ENCODE measurements at regions of chr2 and their contacts with region 1.

Region 1: GRCh38 chr2:192162392-192163042 is 32.2 kb downstream of the TMEFF2 start:
- DNase-seq: peak; percentile 65
- H3K4me3 Mint-ChIP-seq: no peak overlapping the region
- H3K27ac Mint-ChIP-seq: no peak overlapping the region
- H3K4me1 Mint-ChIP-seq: peaks cover 8% of the 10 kb centered on the region
- H3K27me3 Mint-ChIP-seq: peaks cover 10% of the 10 kb centered on the region

Region 2: DNA sequence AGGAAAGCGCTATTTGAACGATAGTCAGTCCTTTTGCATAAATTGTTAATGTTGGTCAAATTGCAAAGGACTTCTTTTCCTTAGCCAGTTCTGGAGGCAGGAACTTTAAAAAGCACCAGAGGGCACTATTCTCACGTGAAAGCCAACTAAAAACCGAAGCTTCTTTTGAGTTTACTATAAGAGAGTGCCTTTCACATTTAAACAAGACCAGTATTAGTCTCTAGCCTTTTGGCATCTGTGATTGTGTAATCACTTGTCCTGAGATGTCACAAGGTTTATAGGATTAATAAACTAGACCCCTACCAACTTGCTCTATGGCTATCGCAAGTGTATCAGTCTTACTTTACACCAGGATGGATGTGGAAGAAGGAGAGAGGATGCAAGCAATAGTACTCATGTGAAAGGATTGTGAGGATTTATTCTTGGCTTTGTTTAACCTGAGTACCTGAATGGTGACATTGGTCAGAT is 997.3 kb before region 1 on chr2:
- CTCF ChIA-PET with region 1: interaction called, 3 read pairs
- POLR2A ChIA-PET with region 1: no interaction called
- intact Hi-C with region 1: loop called (anchors 2 kb)
- DNase-seq: no peak
- H3K4me3 Mint-ChIP-seq: no peak overlapping the region
- H3K27ac Mint-ChIP-seq: no peak overlapping the region
- H3K4me1 Mint-ChIP-seq: peaks cover 13% of the 10 kb centered on the region
- H3K27me3 Mint-ChIP-seq: no peaks in the 10 kb centered on the region

Region 3: DNA sequence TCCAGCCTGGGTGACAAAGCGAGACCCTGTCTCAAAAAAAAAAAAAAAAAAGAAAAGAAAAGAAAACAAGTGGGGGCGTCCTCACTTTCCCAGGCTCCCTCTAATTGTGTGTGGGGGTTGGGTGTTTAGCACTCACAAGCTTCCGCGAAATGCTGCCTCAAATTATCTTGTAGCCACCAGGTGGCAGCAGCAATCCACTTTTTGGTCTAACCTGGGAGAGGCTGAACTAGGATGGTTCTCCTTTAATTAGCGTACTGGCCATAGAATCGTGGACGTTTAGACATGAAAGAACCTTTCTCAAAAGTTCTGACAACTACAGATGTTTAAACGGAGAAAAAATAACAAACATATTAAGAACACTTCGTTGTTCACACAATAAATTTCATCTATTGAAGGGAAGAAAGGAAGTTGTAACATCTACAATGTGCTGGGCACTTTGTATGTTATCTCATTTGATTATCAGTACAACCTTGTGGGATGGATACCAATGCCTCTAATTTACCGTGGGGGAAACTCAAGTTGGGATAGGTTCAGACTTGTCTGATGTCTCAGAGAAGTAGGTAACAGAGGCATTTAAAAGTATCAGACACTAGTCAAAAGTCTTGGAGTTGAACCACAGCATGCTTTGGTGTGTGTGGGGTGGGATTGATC is 607.3 kb before region 1 on chr2:
- CTCF ChIA-PET with region 1: interaction called, 149 read pairs
- POLR2A ChIA-PET with region 1: no interaction called
- intact Hi-C with region 1: loop called (anchors 1 kb)
- DNase-seq: peak; percentile 88
- H3K4me3 Mint-ChIP-seq: no peak overlapping the region
- H3K27ac Mint-ChIP-seq: no peak overlapping the region
- H3K4me1 Mint-ChIP-seq: peaks cover 2% of the 10 kb centered on the region
- H3K27me3 Mint-ChIP-seq: peaks cover 8% of the 10 kb centered on the region

Region 4: DNA sequence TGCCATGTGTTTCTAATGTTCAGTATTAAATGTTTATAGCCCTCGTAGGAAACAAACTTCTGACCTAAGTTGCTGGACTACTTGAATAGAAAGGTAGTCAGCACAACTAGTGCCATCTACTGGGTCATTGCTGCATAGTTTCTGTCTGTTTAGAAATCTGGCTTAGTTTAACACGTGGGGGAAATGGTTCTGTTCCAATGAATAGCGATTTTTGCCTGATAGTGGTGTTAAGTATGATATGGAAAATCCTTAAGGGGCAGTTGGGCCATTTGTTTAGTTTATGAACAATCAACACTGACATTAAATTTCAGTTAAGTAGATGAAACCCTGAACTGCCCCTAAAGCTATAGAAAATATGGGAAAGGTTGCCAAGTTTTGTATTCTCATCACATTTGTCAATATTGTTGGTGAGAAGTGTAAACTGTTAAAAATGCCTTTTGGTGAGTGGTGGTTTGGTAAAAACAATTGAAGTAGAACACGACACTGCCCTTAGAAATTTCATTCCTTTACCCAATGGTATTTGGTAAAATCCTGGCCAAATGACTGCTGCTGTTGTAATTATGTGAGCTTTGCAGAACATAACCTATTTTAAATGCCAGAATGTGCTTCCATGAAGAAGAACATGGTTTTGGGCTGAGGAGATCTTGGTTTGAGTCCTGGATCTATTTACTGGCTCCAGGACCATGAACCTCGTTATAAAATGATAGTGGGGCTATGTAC is 471.3 kb before region 1 on chr2:
- CTCF ChIA-PET with region 1: interaction called, 15 read pairs
- POLR2A ChIA-PET with region 1: no interaction called
- intact Hi-C with region 1: loop called (anchors 5 kb)
- DNase-seq: peak; percentile 31
- H3K4me3 Mint-ChIP-seq: no peak overlapping the region
- H3K27ac Mint-ChIP-seq: peak overlapping the region; percentile 60
- H3K4me1 Mint-ChIP-seq: peaks cover 55% of the 10 kb centered on the region
- H3K27me3 Mint-ChIP-seq: no peaks in the 10 kb centered on the region

Region 5: DNA sequence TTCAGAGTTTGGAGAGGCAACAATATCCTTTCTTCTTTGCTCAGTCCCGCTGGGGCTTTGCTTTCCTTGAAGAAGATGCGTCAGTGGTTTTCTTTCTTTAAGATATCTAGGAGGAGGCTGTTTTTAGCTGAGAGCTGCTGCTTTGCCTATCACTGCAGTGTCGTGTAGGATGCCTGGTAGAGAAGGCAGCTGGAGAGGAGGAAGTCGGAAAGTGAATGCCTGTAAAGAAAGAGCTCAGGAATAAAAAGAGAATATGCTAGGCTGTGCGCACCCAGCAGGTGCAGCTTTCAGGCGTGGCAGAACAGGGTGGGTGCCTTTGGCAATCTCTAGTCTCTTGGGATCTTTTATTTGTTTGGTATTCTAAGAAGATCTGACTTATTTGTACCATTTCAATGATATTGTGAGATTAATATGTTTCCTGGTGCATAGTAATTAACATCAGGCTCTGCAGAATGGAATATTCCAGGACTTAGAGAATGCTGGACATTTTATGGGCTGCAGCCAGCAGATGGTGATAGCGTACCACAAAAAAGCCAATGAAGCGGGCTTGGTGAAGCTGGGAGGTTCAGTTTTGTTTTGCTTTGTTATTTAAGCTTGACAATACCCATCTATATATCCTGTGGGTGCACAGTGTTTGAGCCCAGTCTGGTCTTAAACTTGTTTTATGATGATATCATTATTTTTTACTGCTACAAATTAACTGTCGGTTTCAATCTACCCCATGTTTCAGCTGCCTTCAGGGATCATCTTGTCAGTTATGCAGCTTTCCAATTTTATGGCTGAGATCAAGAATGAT is 350.5 kb before region 1 on chr2:
- CTCF ChIA-PET with region 1: interaction called, 102 read pairs
- POLR2A ChIA-PET with region 1: interaction called, 3 read pairs
- intact Hi-C with region 1: loop called (anchors 1 kb)
- DNase-seq: peak; percentile 54
- H3K4me3 Mint-ChIP-seq: no peak overlapping the region
- H3K27ac Mint-ChIP-seq: no peak overlapping the region
- H3K4me1 Mint-ChIP-seq: no peaks in the 10 kb centered on the region
- H3K27me3 Mint-ChIP-seq: peaks cover 6% of the 10 kb centered on the region

Region 6: DNA sequence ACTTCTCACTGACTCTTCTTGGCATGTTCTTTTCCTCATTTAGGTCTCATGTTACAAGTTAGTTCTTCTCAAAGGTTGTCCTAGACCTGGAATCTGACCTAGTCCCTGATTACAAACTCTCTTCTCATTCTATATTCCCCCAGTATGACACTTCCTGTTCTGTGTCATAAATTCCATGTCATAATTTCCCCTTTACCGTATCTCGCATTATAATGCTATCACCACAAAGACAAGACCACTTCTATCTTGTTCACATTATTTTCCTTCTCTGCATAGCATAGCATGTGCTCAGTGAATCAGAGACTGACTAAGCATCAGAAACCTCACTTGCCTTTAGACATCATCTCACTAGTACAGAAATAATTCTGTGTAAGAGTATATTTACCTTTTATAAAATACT is 252.0 kb before region 1 on chr2:
- CTCF ChIA-PET with region 1: no interaction called
- POLR2A ChIA-PET with region 1: no interaction called
- intact Hi-C with region 1: no loop called
- DNase-seq: no peak
- H3K4me3 Mint-ChIP-seq: no peak overlapping the region
- H3K27ac Mint-ChIP-seq: no peak overlapping the region
- H3K4me1 Mint-ChIP-seq: peaks cover 3% of the 10 kb centered on the region
- H3K27me3 Mint-ChIP-seq: peaks cover 1% of the 10 kb centered on the region

Region 7: DNA sequence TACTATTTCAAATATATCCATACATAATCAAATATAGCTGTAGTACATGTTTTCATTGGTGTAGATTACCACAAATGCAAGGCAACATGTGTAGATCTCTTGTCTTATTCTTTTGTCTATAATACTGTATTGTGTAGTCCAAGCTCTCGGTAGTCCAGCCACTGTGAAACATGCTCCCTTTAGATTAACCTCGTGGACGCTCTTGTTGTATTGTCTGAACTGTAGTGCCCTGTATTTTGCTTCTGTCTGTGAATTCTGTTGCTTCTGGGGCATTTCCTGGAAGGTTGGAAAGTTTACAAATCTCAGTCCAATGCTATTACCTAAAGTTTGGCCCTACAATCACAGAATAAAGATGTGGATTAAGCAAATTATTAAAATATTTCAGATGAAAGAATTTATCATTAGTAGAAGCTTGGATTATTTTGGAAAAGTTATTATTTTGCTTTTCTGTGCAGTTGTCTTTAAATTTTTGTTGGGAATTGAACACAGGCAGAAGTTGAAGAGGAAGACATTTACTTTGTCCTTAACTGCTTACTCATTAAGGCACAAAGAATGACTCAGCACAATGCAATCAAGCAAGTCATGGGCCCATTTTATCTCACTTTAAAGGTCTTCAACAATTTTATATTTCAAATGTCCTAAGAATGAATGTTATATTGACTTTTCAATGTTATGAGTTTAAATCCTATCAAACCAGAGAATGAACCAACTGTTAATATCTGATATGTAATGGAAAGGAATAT is 212.2 kb before region 1 on chr2:
- CTCF ChIA-PET with region 1: no interaction called
- POLR2A ChIA-PET with region 1: no interaction called
- intact Hi-C with region 1: loop called (anchors 10 kb)
- DNase-seq: no peak
- H3K4me3 Mint-ChIP-seq: no peak overlapping the region
- H3K27ac Mint-ChIP-seq: no peak overlapping the region
- H3K4me1 Mint-ChIP-seq: no peaks in the 10 kb centered on the region
- H3K27me3 Mint-ChIP-seq: peaks cover 1% of the 10 kb centered on the region

Region 8: GRCh38 chr2:192208848-192209247 is 46.3 kb after region 1 on chr2:
- CTCF ChIA-PET with region 1: no interaction called
- POLR2A ChIA-PET with region 1: no interaction called
- intact Hi-C with region 1: no loop called
- DNase-seq: no peak
- H3K4me3 Mint-ChIP-seq: no peak overlapping the region
- H3K27ac Mint-ChIP-seq: no peak overlapping the region
- H3K4me1 Mint-ChIP-seq: no peaks in the 10 kb centered on the region
- H3K27me3 Mint-ChIP-seq: peaks cover 4% of the 10 kb centered on the region

Region 9: DNA sequence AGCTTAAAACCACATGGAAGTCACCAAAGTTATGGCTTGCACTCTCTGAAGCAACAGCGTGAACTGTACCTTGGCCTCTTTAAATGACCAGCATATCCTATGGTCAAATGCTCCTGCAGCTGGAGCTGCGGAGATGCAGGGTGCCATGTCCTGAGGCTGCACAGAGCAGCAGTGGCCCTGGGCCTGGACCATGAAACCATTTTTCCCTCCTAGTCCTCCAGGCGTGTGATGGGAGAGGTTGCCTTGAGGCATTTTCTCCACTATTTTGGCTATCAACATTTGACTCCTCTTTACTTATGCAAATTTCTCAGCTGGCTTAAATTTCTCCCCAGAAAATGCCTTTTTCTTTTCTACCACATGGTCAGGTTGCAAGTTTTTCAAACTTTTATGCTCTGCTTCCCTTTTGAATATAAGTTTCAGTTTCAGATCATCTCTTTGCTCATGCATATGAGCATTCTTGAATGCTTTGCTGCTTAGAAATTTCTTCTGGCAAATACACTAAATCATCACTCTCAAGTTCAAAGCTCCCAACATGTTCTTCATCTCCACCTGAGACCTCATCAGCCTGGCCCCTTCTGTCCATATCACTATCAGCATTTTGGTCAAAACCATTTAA is 115.1 kb after region 1 on chr2:
- CTCF ChIA-PET with region 1: no interaction called
- POLR2A ChIA-PET with region 1: no interaction called
- intact Hi-C with region 1: no loop called
- DNase-seq: no peak
- H3K4me3 Mint-ChIP-seq: no peak overlapping the region
- H3K27ac Mint-ChIP-seq: no peak overlapping the region
- H3K4me1 Mint-ChIP-seq: no peaks in the 10 kb centered on the region
- H3K27me3 Mint-ChIP-seq: no peaks in the 10 kb centered on the region

Measured in activated CD4-positive, alpha-beta memory T cell treated with anti-CD3 and anti-CD28 coated beads for 36 hours (primary cell).